Transverse colon (tissue), 4 donors: ENCODE measurements at regions of chr17 and their contacts with region 1.

Region 1: DNA sequence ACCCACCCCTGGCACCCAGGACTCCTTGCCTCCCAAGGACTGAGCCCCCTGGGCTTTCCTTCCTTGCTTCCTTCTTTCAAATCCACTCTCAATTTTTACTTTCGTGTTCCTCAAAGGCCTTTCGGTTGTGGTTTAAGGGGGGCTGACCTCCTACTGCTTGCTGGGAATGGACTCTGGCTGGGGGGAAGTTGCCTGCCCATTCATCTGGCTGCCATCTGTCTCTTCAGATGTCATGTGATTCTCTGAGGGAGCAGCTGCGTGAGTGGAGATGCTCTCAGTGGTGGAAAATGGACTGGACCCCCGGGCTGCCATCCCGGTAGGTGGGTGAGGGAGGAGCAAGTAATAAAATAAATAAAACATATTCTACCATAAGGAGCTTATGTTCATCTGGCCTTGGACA is 93.8 kb upstream of the RPRML start:
- DNase-seq: no peak
- H3K4me3 ChIP-seq: no peak overlapping the region
- H3K27ac ChIP-seq: no peak overlapping the region
- H3K4me1 ChIP-seq: peaks cover 0 to 15% (median 5%) of the 10 kb centered on the region in 4 donors
- H3K27me3 ChIP-seq: no peaks in the 10 kb centered on the region
- CTCF ChIP-seq: no peak
- EP300 ChIP-seq: no peak
- POLR2A ChIP-seq: no peak

Region 2: GRCh38 chr17:46782250-46782953 is 290.5 kb before region 1 on chr17:
- in situ Hi-C with region 1: no loop called
- intact Hi-C with region 1: loop called (anchors 10 kb)
- DNase-seq: peak; percentile 31
- H3K4me3 ChIP-seq: no peak overlapping the region
- H3K27ac ChIP-seq: no peak overlapping the region
- H3K4me1 ChIP-seq: peaks cover 0 to 4% (median 0%) of the 10 kb centered on the region in 4 donors
- H3K27me3 ChIP-seq: no peaks in the 10 kb centered on the region
- CTCF ChIP-seq: peak; percentile 37 to 54 (median 48)
- EP300 ChIP-seq: no peak
- POLR2A ChIP-seq: no peak